CD4-positive, alpha-beta T cell (primary cell): ENCODE measurements at regions of chr2 and their contacts with region 1.

Region 1: DNA sequence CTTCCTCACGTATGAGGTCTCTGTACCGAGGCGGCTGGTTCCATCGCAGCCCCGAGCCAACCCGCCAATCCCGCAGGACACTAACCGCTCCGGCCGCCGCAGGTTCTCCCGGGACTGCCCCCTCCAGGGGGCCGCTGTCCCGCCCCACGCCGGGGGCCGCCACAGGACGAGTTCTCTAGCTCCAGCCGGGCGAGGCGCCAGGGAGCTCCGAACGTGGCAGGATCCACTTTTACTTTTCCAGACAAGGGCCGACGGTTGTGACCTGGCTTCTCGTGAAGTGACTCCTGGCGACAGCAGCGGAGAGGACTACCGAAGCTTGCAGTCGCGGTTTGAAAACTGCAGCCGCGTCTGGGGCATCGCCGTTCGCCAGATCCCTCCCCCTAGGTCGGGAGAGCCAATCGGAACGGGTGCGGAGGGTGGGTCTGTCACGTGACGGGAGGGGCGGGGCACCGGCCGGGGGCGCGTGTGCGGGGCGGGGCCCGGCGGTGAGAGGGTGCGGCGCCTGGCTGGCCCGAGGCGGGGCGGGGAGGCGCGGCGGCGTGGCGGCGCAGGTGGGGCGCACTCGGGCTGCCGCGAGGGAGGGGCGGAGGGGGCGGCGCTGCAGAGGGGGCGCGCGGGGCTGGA is at the start of gene STK17B:
- DNase-seq: peak; percentile 96 to 99 (median 98)
- ATAC-seq: peak; percentile 57
- H3K4me3 ChIP-seq: peak within 1 kb of the TSS; percentile 91
- H3K4me3 Mint-ChIP-seq: peak within 1 kb of the TSS; percentile 99
- H3K27ac ChIP-seq: peak within 1 kb of the TSS; percentile 76 to 99
- H3K27ac Mint-ChIP-seq: peak within 1 kb of the TSS; percentile 85
- H3K4me1 ChIP-seq: peaks cover 40% of the 10 kb centered on the region
- H3K4me1 Mint-ChIP-seq: peaks cover 44% of the 10 kb centered on the region
- H3K27me3 ChIP-seq: no peaks in the 10 kb centered on the region
- H3K27me3 Mint-ChIP-seq: peaks cover 8% of the 10 kb centered on the region
- CTCF ChIP-seq: no peak
- total RNA-seq, gene STK17B: 645 to 648 TPM

Region 2: DNA sequence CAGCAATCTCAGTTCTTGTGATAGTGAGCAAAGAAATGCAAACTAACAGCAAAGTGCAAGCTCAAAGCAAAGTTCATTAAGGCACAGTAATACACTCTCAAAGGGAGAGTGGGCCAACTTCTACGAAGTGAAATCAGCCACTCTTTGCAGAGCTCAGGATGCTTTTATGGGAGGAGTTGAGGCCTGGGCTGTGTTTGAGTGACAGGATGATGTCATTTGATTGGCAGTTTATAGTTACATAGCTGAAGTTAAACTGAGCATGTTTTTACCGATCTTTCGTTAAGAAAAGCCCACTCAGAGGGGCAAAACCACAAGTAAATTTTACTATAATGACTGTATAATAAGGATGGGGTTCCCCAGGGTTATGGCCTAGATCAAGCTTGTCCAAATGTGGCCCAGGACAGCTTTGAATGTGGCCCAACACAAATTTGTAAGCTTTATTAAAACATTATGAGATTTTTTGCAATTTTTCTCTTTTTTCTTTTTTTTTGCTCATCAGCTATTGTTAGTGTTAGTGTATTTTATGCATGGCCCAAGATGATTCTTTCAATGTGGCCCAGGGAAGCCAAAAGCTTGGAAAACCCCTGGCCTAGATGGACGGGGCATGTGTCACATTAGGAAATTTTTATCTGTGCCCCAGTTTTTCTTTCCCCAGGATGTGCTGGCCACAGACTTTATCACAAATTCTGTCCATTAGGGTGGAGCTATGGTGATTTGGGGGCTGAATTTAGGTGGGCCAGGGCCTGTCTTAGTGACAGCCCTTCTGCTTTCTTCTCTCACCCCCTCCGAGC is 94.4 kb before region 1 on chr2:
- CTCF ChIA-PET with region 1: interaction called, 3 read pairs
- POLR2A ChIA-PET with region 1: interaction called, 21 read pairs
- intact Hi-C with region 1: loop called (anchors 5 kb)
- DNase-seq: no peak
- ATAC-seq: no peak
- H3K4me3 ChIP-seq: no peak overlapping the region
- H3K4me3 Mint-ChIP-seq: no peak overlapping the region
- H3K27ac ChIP-seq: no peak overlapping the region
- H3K27ac Mint-ChIP-seq: no peak overlapping the region
- H3K4me1 ChIP-seq: peaks cover 9% of the 10 kb centered on the region
- H3K4me1 Mint-ChIP-seq: peaks cover 27% of the 10 kb centered on the region
- H3K27me3 ChIP-seq: no peaks in the 10 kb centered on the region
- H3K27me3 Mint-ChIP-seq: no peaks in the 10 kb centered on the region
- CTCF ChIP-seq: no peak

Region 3: GRCh38 chr2:196149948-196150347 is 21.4 kb before region 1 on chr2:
- CTCF ChIA-PET with region 1: interaction called, 3 read pairs
- POLR2A ChIA-PET with region 1: interaction called, 82 read pairs
- intact Hi-C with region 1: loop called in 1 of 2 experiments (anchors 2 kb)
- DNase-seq: peak in 2 of 14 experiments; percentile 58 to 59
- ATAC-seq: peak; percentile 17
- H3K4me3 ChIP-seq: no peak overlapping the region
- H3K4me3 Mint-ChIP-seq: peak overlapping the region; percentile 62
- H3K27ac ChIP-seq: peak overlapping the region; percentile 10 to 53
- H3K27ac Mint-ChIP-seq: peak overlapping the region; percentile 85
- H3K4me1 ChIP-seq: peaks cover 51% of the 10 kb centered on the region
- H3K4me1 Mint-ChIP-seq: peaks cover 96% of the 10 kb centered on the region
- H3K27me3 ChIP-seq: no peaks in the 10 kb centered on the region
- H3K27me3 Mint-ChIP-seq: no peaks in the 10 kb centered on the region
- CTCF ChIP-seq: no peak

Region 4: DNA sequence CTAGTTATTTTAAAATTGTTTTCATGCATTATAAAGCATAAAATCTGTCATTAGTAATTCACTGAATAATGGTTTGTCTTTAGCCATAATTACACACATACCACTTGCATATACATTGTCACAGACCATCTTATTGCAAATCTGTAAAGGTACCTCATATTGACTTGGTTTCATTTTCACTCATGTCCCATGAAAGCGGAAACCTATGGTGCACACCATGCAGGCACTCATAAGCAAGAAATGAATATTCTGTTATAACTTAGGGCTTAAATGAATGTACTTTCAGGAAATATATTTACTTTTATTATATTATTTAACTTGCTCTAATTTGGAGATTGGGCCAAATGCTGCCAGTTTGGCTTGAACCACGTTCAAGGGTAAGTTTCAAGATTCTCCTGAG is 29.2 kb after region 1 on chr2:
- CTCF ChIA-PET with region 1: interaction called, 9 read pairs
- POLR2A ChIA-PET with region 1: interaction called, 37 read pairs
- intact Hi-C with region 1: no loop called
- DNase-seq: peak in 5 of 14 experiments; percentile 21 to 76 (median 67)
- ATAC-seq: peak; percentile 80
- H3K4me3 ChIP-seq: peak overlapping the region; percentile 37
- H3K4me3 Mint-ChIP-seq: peak overlapping the region; percentile 74
- H3K27ac ChIP-seq: peak overlapping the region; percentile 19 to 60
- H3K27ac Mint-ChIP-seq: peak overlapping the region; percentile 90
- H3K4me1 ChIP-seq: peaks cover 14% of the 10 kb centered on the region
- H3K4me1 Mint-ChIP-seq: peaks cover 56% of the 10 kb centered on the region
- H3K27me3 ChIP-seq: no peaks in the 10 kb centered on the region
- H3K27me3 Mint-ChIP-seq: no peaks in the 10 kb centered on the region
- CTCF ChIP-seq: no peak

Region 5: DNA sequence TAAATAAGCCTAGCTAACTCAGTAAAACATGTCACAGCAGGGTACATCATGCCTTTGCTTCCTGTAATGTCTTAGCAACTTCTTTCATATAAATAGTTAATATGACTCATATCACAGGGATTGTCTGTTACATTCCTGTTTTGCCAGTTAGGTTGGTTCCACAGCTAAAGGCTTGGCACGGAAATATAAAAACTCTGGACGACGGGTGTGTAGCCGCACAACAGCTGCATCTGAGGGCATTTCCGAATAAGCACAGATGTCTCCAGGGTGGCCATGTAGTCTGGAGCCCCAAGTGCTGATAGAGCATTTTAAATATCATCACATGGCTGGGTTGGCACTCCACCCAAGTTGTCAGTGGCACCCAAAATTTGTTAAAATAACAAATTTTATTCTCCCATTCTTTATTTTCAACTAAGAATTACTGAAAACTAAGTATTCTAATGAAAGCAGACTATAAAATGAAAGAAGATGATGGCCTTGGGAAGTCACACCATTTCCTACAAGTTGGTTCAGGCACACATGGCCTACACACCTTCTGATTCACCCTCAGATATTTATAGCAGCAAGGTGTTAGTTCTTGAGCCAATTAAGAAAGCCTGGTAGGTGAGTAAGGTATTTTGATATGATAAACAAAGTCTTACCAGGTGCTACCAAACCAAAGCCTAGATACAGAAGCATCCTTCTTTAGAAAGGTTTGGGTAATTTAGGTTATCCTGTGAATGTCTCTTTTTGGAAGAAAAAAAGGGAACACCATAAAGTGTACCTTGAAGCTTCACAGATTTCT is 61.9 kb after region 1 on chr2:
- CTCF ChIA-PET with region 1: interaction called, 8 read pairs
- POLR2A ChIA-PET with region 1: interaction called, 60 read pairs
- intact Hi-C with region 1: loop called in 1 of 2 experiments (anchors 2 kb)
- DNase-seq: peak in 1 of 14 experiments; percentile 40
- ATAC-seq: no peak
- H3K4me3 ChIP-seq: no peak overlapping the region
- H3K4me3 Mint-ChIP-seq: peak overlapping the region; percentile 23
- H3K27ac ChIP-seq: peak overlapping the region; percentile 19 to 63
- H3K27ac Mint-ChIP-seq: peak overlapping the region; percentile 97
- H3K4me1 ChIP-seq: peaks cover 58% of the 10 kb centered on the region
- H3K4me1 Mint-ChIP-seq: peaks cover 94% of the 10 kb centered on the region
- H3K27me3 ChIP-seq: no peaks in the 10 kb centered on the region
- H3K27me3 Mint-ChIP-seq: no peaks in the 10 kb centered on the region
- CTCF ChIP-seq: no peak

Region 6: GRCh38 chr2:196277002-196277401 is 105.6 kb after region 1 on chr2:
- CTCF ChIA-PET with region 1: interaction called, 17 read pairs
- POLR2A ChIA-PET with region 1: interaction called, 60 read pairs
- intact Hi-C with region 1: loop called (anchors 2 to 5 kb)
- DNase-seq: peak in 7 of 14 experiments; percentile 9 to 79 (median 46)
- ATAC-seq: peak; percentile 59
- H3K4me3 ChIP-seq: no peak overlapping the region
- H3K4me3 Mint-ChIP-seq: peak overlapping the region; percentile 11
- H3K27ac ChIP-seq: no peak overlapping the region
- H3K27ac Mint-ChIP-seq: peak overlapping the region; percentile 79
- H3K4me1 ChIP-seq: peaks cover 25% of the 10 kb centered on the region
- H3K4me1 Mint-ChIP-seq: peaks cover 70% of the 10 kb centered on the region
- H3K27me3 ChIP-seq: no peaks in the 10 kb centered on the region
- H3K27me3 Mint-ChIP-seq: no peaks in the 10 kb centered on the region
- CTCF ChIP-seq: peak; percentile 81